Activated CD8-positive, alpha-beta T cell treated with anti-CD3 and anti-CD28 coated beads for 36 hours (primary cell): ENCODE measurements at regions of chr10 and their contacts with region 1.

Region 1: GRCh38 chr10:6275022-6275997 is 72.6 kb downstream of the PFKFB3 start:
- DNase-seq: peak; percentile 96
- ATAC-seq: peak; percentile 85
- H3K4me3 Mint-ChIP-seq: peak overlapping the region; percentile 72
- H3K27ac Mint-ChIP-seq: peak overlapping the region; percentile 96
- H3K4me1 Mint-ChIP-seq: peaks cover 49% of the 10 kb centered on the region
- H3K27me3 Mint-ChIP-seq: no peaks in the 10 kb centered on the region
- CTCF ChIP-seq: no peak

Region 2: DNA sequence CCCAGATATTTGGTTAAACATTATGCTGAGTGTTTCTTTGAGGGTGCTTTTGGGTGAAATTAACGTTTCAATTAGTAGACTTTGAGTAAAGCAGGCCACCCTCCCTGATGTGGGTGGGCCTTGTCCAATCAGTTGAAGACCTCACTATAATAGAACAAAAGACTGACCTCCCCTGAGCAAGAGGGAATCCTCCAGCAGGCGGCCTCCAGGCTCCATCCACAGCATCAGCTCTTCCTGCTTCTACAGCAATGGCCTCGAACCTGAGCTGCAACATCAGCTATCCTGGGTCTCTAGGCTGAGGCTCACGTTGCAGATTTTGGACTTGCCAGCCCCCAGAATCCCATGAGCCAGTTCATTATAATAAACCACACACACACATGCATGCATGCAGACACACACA is 31.6 kb after region 1 on chr10:
- CTCF ChIA-PET with region 1: no interaction called
- POLR2A ChIA-PET with region 1: no interaction called
- intact Hi-C with region 1: no loop called
- DNase-seq: no peak
- ATAC-seq: no peak
- H3K4me3 Mint-ChIP-seq: no peak overlapping the region
- H3K27ac Mint-ChIP-seq: no peak overlapping the region
- H3K4me1 Mint-ChIP-seq: peaks cover 8% of the 10 kb centered on the region
- H3K27me3 Mint-ChIP-seq: peaks cover 2% of the 10 kb centered on the region
- CTCF ChIP-seq: no peak

Region 3: GRCh38 chr10:6348096-6348874 is 73.0 kb after region 1 on chr10:
- CTCF ChIA-PET with region 1: interaction called, 12 read pairs
- POLR2A ChIA-PET with region 1: interaction called, 22 read pairs
- intact Hi-C with region 1: loop called (anchors 1 kb)
- DNase-seq: peak; percentile 93
- ATAC-seq: peak; percentile 90
- H3K4me3 Mint-ChIP-seq: peak overlapping the region; percentile 66
- H3K27ac Mint-ChIP-seq: peak overlapping the region; percentile 99
- H3K4me1 Mint-ChIP-seq: peaks cover 56% of the 10 kb centered on the region
- H3K27me3 Mint-ChIP-seq: no peaks in the 10 kb centered on the region
- CTCF ChIP-seq: no peak

Region 4: GRCh38 chr10:6382081-6382480 is 106.8 kb after region 1 on chr10:
- CTCF ChIA-PET with region 1: interaction called, 3 read pairs
- POLR2A ChIA-PET with region 1: interaction called, 3 read pairs
- intact Hi-C with region 1: loop called (anchors 10 kb)
- DNase-seq: peak; percentile 69
- ATAC-seq: peak; percentile 91
- H3K4me3 Mint-ChIP-seq: peak overlapping the region; percentile 54
- H3K27ac Mint-ChIP-seq: peak overlapping the region; percentile 53
- H3K4me1 Mint-ChIP-seq: peaks cover 24% of the 10 kb centered on the region
- H3K27me3 Mint-ChIP-seq: no peaks in the 10 kb centered on the region
- CTCF ChIP-seq: no peak

Region 5: GRCh38 chr10:7272008-7272407 is 996.7 kb after region 1 on chr10:
- CTCF ChIA-PET with region 1: no interaction called
- POLR2A ChIA-PET with region 1: no interaction called
- intact Hi-C with region 1: no loop called
- DNase-seq: peak; percentile 26
- ATAC-seq: peak; percentile 40
- H3K4me3 Mint-ChIP-seq: peak overlapping the region; percentile 18
- H3K27ac Mint-ChIP-seq: peak overlapping the region; percentile 84
- H3K4me1 Mint-ChIP-seq: peaks cover 76% of the 10 kb centered on the region
- H3K27me3 Mint-ChIP-seq: no peaks in the 10 kb centered on the region
- CTCF ChIP-seq: no peak